ENCODE measurements at regions of chr5 and their contacts with region 1.

Region 1: DNA sequence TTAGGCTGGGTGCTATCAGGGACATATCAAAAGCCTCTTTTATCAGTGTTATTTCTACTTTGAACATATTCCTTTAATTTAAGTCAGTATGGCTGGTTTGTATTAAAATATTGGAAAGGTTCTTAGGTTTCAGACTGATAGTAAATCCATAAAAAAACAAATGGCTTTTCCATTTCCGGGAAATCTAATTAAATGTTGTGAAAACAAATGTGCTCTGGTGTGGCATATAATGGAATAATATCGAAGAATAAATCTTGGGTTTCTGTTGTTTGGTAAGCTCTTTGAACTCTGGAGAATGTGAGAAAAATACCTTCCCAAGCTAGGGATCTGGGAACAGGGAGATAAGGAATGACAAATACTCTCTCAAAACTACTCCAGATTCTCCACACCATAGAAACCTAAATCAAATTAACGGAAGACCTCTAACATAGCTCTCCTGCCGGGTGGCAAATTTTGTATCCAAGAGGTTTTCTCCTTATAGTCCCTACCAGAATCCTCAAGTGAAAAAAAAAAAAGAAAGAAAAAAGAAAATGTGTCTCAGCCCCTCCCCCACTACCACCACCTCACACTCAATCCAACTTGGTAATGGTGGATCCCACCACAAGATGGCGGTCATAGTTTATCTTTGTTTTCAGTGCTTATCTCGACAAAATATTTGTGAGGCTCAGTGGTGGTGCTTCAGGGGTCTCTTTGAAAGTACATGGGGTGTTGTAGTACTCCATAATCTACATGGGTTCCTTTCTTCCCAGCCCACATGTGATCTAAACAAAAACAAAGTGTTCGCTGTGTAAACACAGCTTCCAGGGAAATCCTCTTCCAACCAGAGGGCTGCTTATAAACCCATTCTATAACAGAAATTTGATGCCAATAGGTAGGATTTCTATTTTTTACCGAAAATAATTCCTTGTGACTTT is 54.6 kb upstream of the FST start:
- DNase-seq: peak; percentile 74
- H3K4me3 ChIP-seq: no peak overlapping the region
- H3K27ac ChIP-seq: no peak overlapping the region
- H3K4me1 ChIP-seq: no peaks in the 10 kb centered on the region
- H3K27me3 ChIP-seq: no peaks in the 10 kb centered on the region
- CTCF ChIP-seq: peak; percentile 72

Region 2: GRCh38 chr5:52922386-52922785 is 503.5 kb before region 1 on chr5:
- CTCF ChIA-PET with region 1: interaction called, 10 read pairs
- POLR2A ChIA-PET with region 1: no interaction called
- intact Hi-C with region 1: no loop called
- DNase-seq: peak; percentile 57
- H3K4me3 ChIP-seq: no peak overlapping the region
- H3K27ac ChIP-seq: no peak overlapping the region
- H3K4me1 ChIP-seq: peaks cover 5% of the 10 kb centered on the region
- H3K27me3 ChIP-seq: no peaks in the 10 kb centered on the region
- CTCF ChIP-seq: no peak

Region 3: DNA sequence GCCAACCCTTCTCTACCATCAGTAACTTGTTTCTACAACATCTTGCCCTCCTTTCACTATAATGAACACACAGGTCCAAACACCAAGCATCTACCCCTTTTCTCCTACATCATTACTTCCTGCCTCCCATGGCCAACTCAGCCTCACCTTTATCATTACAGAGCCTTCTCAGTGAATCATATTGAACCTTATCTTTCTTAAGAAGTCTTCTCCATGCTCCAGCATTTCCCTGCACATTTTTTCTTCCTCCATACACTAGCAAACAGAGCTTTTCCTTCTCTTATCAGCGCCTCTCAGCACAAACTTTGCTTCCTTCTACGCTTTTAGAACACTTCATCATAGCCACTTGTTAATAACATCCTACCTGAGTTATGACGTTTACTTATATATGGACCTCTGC is 736.3 kb after region 1 on chr5:
- CTCF ChIA-PET with region 1: no interaction called
- POLR2A ChIA-PET with region 1: no interaction called
- intact Hi-C with region 1: no loop called
- DNase-seq: no peak
- H3K4me3 ChIP-seq: no peak overlapping the region
- H3K27ac ChIP-seq: no peak overlapping the region
- H3K4me1 ChIP-seq: no peaks in the 10 kb centered on the region
- H3K27me3 ChIP-seq: no peaks in the 10 kb centered on the region
- CTCF ChIP-seq: no peak

Measured in A673 (cell line).